Mammary epithelial cell (primary cell): ENCODE measurements at regions of chr4 and their contacts with region 1.

Region 1: DNA sequence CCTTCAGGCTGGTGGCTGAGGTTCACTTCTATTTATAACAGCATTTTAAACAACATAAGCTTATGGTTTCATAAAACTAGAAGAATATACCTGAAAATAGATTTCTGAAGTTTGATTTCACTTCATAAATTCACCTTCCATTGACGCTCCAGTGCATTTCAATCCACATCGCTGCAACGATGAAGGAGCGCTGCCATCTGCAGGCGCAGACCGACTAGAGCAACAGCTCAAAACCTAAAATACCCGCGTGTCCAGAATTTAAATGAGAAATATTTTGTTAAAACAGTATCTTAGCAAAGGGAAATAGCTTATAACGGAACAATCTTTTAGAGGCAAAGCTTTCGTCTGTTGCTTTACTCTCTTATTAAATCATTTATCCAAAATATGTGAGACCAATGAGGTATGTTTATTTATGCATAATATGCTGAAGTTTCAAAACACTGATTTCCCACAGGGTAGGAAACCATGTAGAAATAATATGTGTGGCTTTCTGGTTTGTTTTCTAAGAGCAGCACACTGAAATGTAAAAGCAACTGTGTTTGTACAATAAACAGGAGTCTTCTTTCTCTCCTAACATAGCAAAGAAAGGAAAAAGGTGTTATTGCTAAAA is 816.4 kb upstream of the FRG1 start:
- DNase-seq: peak; percentile 33
- H3K4me3 ChIP-seq: no peak overlapping the region
- H3K27ac ChIP-seq: no peak overlapping the region
- H3K4me1 ChIP-seq: peaks cover 4% of the 10 kb centered on the region
- H3K27me3 ChIP-seq: no peaks in the 10 kb centered on the region
- CTCF ChIP-seq: peak; percentile 75 to 83

Region 2: DNA sequence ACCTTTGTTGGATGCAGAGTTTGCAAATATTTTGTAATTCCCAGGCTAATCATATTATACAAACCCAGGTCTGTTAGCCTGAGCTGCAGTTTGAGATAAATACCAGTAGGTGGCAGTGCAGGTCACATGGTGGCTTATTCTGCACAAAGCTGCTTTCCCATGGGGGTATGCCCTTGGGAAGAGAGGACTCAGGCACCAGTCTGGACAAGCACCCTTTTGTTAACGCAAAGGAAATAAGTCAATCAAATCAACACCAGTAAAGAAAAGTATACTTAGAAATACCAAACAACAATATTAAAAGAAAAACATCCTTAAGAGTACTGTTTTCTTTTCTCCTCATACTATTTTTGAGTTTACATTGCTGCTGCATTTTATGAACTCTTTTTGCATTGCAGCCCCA is 1517.7 kb before region 1 on chr4:
- CTCF ChIA-PET with region 1: no interaction called
- dilution Hi-C with region 1: no loop called
- in situ Hi-C with region 1: no loop called
- intact Hi-C with region 1: loop called (anchors 1 kb)
- DNase-seq: peak; percentile 57
- H3K4me3 ChIP-seq: no peak overlapping the region
- H3K27ac ChIP-seq: no peak overlapping the region
- H3K4me1 ChIP-seq: peaks cover 16% of the 10 kb centered on the region
- H3K27me3 ChIP-seq: no peaks in the 10 kb centered on the region
- CTCF ChIP-seq: peak; percentile 87 to 89

Region 3: GRCh38 chr4:188316391-188316790 is 807.9 kb before region 1 on chr4:
- CTCF ChIA-PET with region 1: no interaction called
- dilution Hi-C with region 1: no loop called
- in situ Hi-C with region 1: no loop called
- intact Hi-C with region 1: no loop called
- DNase-seq: no peak
- H3K4me3 ChIP-seq: no peak overlapping the region
- H3K27ac ChIP-seq: no peak overlapping the region
- H3K4me1 ChIP-seq: no peaks in the 10 kb centered on the region
- H3K27me3 ChIP-seq: no peaks in the 10 kb centered on the region
- CTCF ChIP-seq: no peak

Region 4: DNA sequence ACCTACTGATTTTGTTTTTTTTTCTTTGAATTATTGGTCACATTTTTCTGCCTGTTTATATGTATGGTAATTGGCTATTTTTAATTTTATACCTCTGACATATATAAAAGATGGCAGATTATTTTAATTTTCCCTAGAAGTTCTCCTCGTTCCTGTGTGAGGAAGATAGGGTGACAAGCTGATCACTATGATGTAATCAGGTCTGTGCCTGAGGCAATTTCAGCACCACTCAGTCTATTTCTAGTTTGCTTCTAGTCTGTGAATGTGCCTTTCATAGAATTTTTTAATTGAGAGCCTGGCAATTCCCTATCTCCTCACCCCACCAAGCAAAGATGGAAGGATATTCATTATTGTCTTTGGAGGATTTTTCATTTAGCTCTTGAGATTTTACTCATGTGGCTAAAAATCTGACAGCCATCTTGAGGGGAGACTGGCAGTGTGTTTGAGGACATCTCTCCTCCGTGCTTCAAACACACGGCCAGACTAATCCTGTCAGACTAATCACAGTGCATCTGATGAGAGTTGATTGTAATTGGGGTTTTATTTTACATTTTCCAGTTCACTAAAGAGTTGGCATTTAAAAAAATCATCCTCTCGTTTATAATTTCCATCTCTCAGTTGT is 484.7 kb before region 1 on chr4:
- CTCF ChIA-PET with region 1: no interaction called
- dilution Hi-C with region 1: no loop called
- in situ Hi-C with region 1: no loop called
- intact Hi-C with region 1: loop called (anchors 10 kb)
- DNase-seq: no peak
- H3K4me3 ChIP-seq: no peak overlapping the region
- H3K27ac ChIP-seq: no peak overlapping the region
- H3K4me1 ChIP-seq: no peaks in the 10 kb centered on the region
- H3K27me3 ChIP-seq: no peaks in the 10 kb centered on the region
- CTCF ChIP-seq: no peak

Region 5: DNA sequence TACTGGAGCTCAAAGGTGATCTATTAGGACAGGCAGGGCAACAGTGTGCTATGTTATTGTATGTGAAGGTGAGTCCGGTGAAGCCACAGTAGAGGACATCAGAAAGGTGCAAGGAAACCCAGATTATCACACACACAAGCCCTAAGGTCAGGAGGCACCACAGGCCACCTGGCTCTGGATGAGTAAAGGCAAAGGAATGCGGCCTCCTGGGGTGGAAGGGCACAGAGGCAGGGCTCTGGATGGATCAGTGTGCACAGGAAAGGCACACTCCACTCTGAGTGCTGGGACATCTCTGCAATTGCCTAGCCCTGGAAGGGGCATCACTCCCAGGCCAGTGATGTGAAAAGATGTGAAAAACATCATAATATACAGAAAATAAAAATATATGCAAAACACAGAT is 301.6 kb before region 1 on chr4:
- CTCF ChIA-PET with region 1: no interaction called
- dilution Hi-C with region 1: no loop called
- in situ Hi-C with region 1: no loop called
- intact Hi-C with region 1: loop called (anchors 5 kb)
- DNase-seq: peak; percentile 21
- H3K4me3 ChIP-seq: no peak overlapping the region
- H3K27ac ChIP-seq: no peak overlapping the region
- H3K4me1 ChIP-seq: no peaks in the 10 kb centered on the region
- H3K27me3 ChIP-seq: no peaks in the 10 kb centered on the region
- CTCF ChIP-seq: no peak

Region 6: DNA sequence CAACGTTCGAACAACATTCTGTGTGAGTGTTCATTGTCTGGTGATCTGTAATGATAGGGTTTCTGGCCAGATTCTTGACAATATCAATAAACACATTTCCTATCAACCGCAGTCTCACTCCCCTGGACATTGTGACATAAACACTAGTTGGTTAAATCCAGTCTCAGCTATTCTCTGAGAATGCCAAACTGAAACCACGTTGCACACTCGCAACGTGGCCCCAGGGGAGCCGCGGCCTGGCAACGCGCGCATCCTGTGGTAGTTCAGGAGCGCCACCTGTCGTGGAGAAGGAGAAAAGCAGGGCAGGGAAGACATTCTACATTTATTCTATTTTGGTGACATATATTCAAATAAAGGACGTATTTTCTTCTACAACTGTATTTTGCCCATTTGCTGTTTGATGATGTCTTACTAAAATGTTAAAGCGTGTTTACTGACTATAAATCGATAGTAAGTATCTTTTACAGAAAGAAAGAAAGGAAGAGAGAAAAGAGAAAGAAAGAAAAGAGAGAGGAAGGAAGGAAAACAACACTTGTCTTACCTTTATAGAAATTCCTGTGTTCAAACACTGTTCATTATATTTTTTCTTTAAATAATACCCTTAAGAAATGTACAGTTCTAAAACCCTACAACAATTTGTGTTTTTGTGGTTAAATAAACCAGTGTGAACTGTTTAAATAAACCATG is 78.1 kb after region 1 on chr4:
- CTCF ChIA-PET with region 1: interaction called, 8 read pairs
- dilution Hi-C with region 1: no loop called
- in situ Hi-C with region 1: no loop called
- intact Hi-C with region 1: loop called (anchors 1 kb)
- DNase-seq: peak; percentile 59
- H3K4me3 ChIP-seq: peak overlapping the region in 2 of 3 experiments; percentile 34 to 47
- H3K27ac ChIP-seq: no peak overlapping the region
- H3K4me1 ChIP-seq: peaks cover 5% of the 10 kb centered on the region
- H3K27me3 ChIP-seq: no peaks in the 10 kb centered on the region
- CTCF ChIP-seq: peak; percentile 93 to 96

Region 7: GRCh38 chr4:189265515-189265914 is 141.3 kb after region 1 on chr4:
- CTCF ChIA-PET with region 1: no interaction called
- dilution Hi-C with region 1: no loop called
- in situ Hi-C with region 1: no loop called
- intact Hi-C with region 1: no loop called
- DNase-seq: no peak
- H3K4me3 ChIP-seq: no peak overlapping the region
- H3K27ac ChIP-seq: no peak overlapping the region
- H3K4me1 ChIP-seq: no peaks in the 10 kb centered on the region
- H3K27me3 ChIP-seq: no peaks in the 10 kb centered on the region
- CTCF ChIP-seq: no peak

Region 8: DNA sequence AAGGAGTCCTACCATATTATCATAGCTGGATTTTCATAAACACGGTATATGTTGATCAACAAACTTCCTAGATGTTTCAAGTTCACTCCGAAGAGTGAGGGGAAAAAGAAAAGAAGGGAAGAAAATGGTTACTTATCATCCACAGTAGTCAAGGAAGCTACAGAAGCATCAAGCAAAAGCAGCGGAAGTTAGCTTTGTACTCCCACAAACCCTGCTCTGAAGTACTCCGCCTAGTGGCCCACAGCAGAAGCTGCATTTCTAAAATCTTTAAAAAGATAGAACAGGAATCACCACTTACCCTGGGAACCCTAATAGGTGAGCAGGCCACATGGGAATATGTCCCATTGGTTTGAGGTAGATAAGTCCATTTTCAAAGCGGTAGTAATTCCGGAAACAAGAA is 787.9 kb after region 1 on chr4:
- CTCF ChIA-PET with region 1: no interaction called
- dilution Hi-C with region 1: no loop called
- in situ Hi-C with region 1: no loop called
- intact Hi-C with region 1: loop called (anchors 10 kb)
- DNase-seq: peak; percentile 1
- H3K4me3 ChIP-seq: no peak overlapping the region
- H3K27ac ChIP-seq: no peak overlapping the region
- H3K4me1 ChIP-seq: no peaks in the 10 kb centered on the region
- H3K27me3 ChIP-seq: no peaks in the 10 kb centered on the region
- CTCF ChIP-seq: peak; percentile 41 to 52